Activated CD4-positive, alpha-beta T cell treated with anti-CD3 and anti-CD28 coated beads for 36 hours (primary cell): ENCODE measurements at regions of chr1 and their contacts with region 1.

Region 1: GRCh38 chr1:40862008-40862863 is at the start of gene CITED4:
- DNase-seq: peak; percentile 97
- ATAC-seq: peak; percentile 98
- H3K4me3 Mint-ChIP-seq: peak within 1 kb of the TSS; percentile 84
- H3K27ac Mint-ChIP-seq: peak within 1 kb of the TSS; percentile 96
- H3K4me1 Mint-ChIP-seq: peaks cover 11% of the 10 kb centered on the region
- H3K27me3 Mint-ChIP-seq: peaks cover 11% of the 10 kb centered on the region
- total RNA-seq, gene CITED4: 1.6 to 3.0 TPM

Region 2: DNA sequence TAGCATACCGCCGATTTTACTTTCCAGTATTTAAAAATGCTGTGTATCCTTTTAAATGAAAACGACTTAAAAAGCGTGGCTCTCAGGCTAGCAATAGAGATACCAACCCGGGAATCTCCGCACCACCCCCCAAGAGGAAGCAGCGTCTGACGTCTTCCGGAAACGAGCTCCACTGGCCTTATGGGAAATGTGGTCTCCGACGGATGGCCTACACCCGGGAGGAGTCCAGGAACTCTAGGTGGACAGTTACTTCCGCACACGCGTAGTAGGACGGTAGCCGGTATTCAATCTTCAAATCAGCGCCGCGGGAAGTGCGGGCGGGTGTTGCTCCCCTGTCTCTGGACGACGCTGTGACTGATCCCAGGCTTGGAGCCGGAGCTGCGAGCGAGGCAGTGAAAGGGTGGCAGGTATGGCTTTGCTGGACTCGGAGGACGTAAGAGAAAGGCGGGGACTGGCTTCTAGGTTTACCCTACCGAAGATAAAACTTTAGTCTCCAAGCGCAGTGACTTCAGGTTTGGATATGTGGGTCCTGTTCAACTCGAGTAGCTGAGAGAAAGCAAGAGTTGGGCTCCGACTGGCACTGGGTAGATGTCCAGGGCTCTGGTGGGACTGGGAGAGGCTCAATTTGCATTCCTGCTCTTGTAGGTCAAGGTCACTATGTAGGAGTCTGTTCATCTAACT is 330.7 kb before region 1 on chr1 and contains the start of gene ZNF684:
- CTCF ChIA-PET with region 1: no interaction called
- POLR2A ChIA-PET with region 1: no interaction called
- intact Hi-C with region 1: loop called in 1 of 2 experiments (anchors 5 kb)
- DNase-seq: peak; percentile 91
- ATAC-seq: peak; percentile 98
- H3K4me3 Mint-ChIP-seq: peak within 1 kb of the TSS; percentile 88
- H3K27ac Mint-ChIP-seq: peak within 1 kb of the TSS; percentile 83
- H3K4me1 Mint-ChIP-seq: peaks cover 17% of the 10 kb centered on the region
- H3K27me3 Mint-ChIP-seq: peaks cover 6% of the 10 kb centered on the region
- total RNA-seq, gene ZNF684: 4.5 to 6.6 TPM

Region 3: DNA sequence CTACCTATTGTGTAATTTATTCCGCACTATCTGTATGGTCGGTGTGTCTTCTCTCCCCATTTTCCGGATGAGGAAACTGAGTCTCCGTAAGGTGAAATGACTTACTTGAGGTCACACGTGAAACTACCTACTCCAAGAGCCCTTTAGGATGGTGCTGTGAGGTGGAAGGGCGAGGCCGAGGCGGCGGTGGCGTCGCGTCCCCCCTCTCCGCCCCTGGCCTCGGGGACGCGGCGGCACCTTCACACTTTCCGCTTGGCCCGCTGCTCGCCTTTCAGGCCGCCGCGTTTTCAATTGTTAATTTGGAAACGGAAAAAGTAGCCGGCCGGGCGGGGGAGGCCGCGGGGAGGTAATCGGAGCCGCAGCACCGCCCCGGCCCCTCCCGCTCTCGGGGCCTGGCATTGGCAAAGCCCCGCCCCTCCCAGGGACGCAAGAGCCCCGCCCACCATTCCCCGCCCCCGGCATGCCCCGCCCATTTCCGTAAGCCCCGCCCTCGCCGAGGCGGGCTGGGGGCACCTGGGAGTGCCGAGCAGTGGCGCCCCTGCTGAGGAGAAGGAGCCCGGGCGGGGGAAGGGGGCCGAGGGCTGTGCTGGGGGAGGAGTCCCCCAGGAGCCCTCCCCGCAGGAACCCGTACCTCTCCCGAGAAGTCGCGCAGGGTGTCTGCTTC is 60.0 kb before region 1 on chr1:
- CTCF ChIA-PET with region 1: no interaction called
- POLR2A ChIA-PET with region 1: interaction called, 3 read pairs
- intact Hi-C with region 1: loop called (anchors 1 kb)
- DNase-seq: peak; percentile 93
- ATAC-seq: peak; percentile 95
- H3K4me3 Mint-ChIP-seq: peak overlapping the region; percentile 48
- H3K27ac Mint-ChIP-seq: no peak overlapping the region
- H3K4me1 Mint-ChIP-seq: peaks cover 25% of the 10 kb centered on the region
- H3K27me3 Mint-ChIP-seq: no peaks in the 10 kb centered on the region

Region 4: GRCh38 chr1:40818264-40818961 is 43.8 kb before region 1 on chr1:
- CTCF ChIA-PET with region 1: no interaction called
- POLR2A ChIA-PET with region 1: no interaction called
- intact Hi-C with region 1: loop called (anchors 1 kb)
- DNase-seq: peak; percentile 93
- ATAC-seq: peak; percentile 99
- H3K4me3 Mint-ChIP-seq: peak overlapping the region; percentile 67
- H3K27ac Mint-ChIP-seq: peak overlapping the region; percentile 37
- H3K4me1 Mint-ChIP-seq: peaks cover 17% of the 10 kb centered on the region
- H3K27me3 Mint-ChIP-seq: no peaks in the 10 kb centered on the region

Region 5: DNA sequence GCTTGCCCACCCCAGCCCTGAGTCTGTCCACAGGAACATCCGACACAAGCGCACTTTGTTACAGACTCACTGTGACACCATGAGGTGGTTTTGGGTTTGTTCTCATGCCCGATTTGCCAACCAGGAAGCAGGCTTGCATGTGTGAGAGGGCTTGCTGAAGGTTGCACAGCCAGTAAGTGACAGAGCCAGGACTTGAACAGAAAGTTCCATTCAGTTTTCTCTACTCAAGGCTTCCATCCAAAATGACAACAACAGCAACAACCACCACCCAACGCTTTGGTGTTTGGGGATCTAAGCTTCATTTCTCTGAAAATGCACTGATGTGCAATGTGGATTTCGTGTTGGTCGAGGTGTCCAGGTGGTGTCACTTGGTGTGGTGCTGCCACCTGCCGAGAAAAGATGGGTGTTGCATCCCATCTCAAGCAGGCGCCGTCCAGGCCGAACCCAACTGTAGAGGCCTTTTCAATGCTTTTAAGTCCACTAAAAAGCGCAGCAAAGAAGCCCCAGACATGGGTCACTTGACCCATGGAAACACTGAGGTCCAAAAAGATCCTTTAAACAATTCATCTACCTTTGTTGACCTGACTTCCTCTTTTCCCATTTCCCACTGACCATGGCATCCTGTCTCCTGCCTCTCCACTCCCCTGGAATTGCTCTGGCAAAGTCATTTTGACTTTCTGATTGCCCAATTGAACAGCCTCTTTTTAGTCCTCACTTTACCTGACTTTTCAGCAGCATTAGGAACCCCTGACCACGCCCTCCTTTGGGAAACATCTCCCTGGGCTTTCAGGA is 12.2 kb before region 1 on chr1:
- CTCF ChIA-PET with region 1: interaction called, 10 read pairs
- POLR2A ChIA-PET with region 1: interaction called, 3 read pairs
- intact Hi-C with region 1: no loop called
- DNase-seq: peak; percentile 88
- ATAC-seq: peak; percentile 90
- H3K4me3 Mint-ChIP-seq: no peak overlapping the region
- H3K27ac Mint-ChIP-seq: no peak overlapping the region
- H3K4me1 Mint-ChIP-seq: peaks cover 10% of the 10 kb centered on the region
- H3K27me3 Mint-ChIP-seq: no peaks in the 10 kb centered on the region

Region 6: GRCh38 chr1:40884055-40884795 is 22.0 kb after region 1 on chr1:
- CTCF ChIA-PET with region 1: no interaction called
- POLR2A ChIA-PET with region 1: no interaction called
- intact Hi-C with region 1: no loop called
- DNase-seq: peak; percentile 22
- ATAC-seq: no peak
- H3K4me3 Mint-ChIP-seq: no peak overlapping the region
- H3K27ac Mint-ChIP-seq: no peak overlapping the region
- H3K4me1 Mint-ChIP-seq: peaks cover 4% of the 10 kb centered on the region
- H3K27me3 Mint-ChIP-seq: peaks cover 32% of the 10 kb centered on the region

Region 7: GRCh38 chr1:40936931-40937339 is 74.7 kb after region 1 on chr1:
- CTCF ChIA-PET with region 1: no interaction called
- POLR2A ChIA-PET with region 1: no interaction called
- intact Hi-C with region 1: no loop called
- DNase-seq: no peak
- ATAC-seq: no peak
- H3K4me3 Mint-ChIP-seq: no peak overlapping the region
- H3K27ac Mint-ChIP-seq: no peak overlapping the region
- H3K4me1 Mint-ChIP-seq: no peaks in the 10 kb centered on the region
- H3K27me3 Mint-ChIP-seq: peaks cover 3% of the 10 kb centered on the region

Region 8: GRCh38 chr1:41360993-41361753 is 498.9 kb after region 1 on chr1 and contains the start of gene FOXO6:
- CTCF ChIA-PET with region 1: no interaction called
- POLR2A ChIA-PET with region 1: no interaction called
- intact Hi-C with region 1: loop called in 1 of 2 experiments (anchors 1 kb)
- DNase-seq: peak; percentile 96
- ATAC-seq: peak; percentile 96
- H3K4me3 Mint-ChIP-seq: peak within 1 kb of the TSS; percentile 49
- H3K27ac Mint-ChIP-seq: no peak within 1 kb of the TSS
- H3K4me1 Mint-ChIP-seq: peaks cover 10% of the 10 kb centered on the region
- H3K27me3 Mint-ChIP-seq: peaks cover 24% of the 10 kb centered on the region
- total RNA-seq, gene FOXO6: 0.09 TPM in 1 of 2 experiments, not detected in the other

Region 9: DNA sequence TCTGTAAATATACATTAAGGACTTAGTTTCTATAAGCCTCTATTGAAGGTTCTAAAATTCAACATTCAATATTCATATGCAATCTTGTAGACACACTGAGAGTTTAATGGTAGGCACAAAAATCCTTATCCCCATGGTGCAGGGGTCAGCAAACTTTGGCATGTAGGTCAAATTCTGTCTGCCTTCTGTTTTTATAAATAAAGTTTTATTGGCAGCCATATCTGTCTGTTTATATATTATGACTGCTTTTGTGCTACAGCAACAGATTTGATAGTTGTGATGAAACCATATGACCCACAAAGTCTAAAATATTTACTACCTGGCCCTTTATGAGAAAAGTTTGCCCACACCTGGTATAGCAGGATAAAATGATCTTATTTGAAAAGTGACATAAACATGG is 1704.8 kb after region 1 on chr1:
- CTCF ChIA-PET with region 1: no interaction called
- POLR2A ChIA-PET with region 1: no interaction called
- intact Hi-C with region 1: no loop called
- DNase-seq: no peak
- ATAC-seq: no peak
- H3K4me3 Mint-ChIP-seq: no peak overlapping the region
- H3K27ac Mint-ChIP-seq: no peak overlapping the region
- H3K4me1 Mint-ChIP-seq: no peaks in the 10 kb centered on the region
- H3K27me3 Mint-ChIP-seq: no peaks in the 10 kb centered on the region